Dorsolateral prefrontal cortex (tissue), 120 donors: ENCODE measurements at regions of chr2 and their contacts with region 1.

Region 1: GRCh38 chr2:75403991-75404428 is 156.7 kb downstream of the EVA1A start:
- DNase-seq: no peak
- H3K4me3 ChIP-seq: no peak overlapping the region
- H3K27ac ChIP-seq: no peak overlapping the region
- H3K27me3 ChIP-seq: peaks cover 0 to 64% (median 4%) of the 10 kb centered on the region in 45 donors
- CTCF ChIP-seq: peak; percentile 55 to 91 (median 78)

Region 2: DNA sequence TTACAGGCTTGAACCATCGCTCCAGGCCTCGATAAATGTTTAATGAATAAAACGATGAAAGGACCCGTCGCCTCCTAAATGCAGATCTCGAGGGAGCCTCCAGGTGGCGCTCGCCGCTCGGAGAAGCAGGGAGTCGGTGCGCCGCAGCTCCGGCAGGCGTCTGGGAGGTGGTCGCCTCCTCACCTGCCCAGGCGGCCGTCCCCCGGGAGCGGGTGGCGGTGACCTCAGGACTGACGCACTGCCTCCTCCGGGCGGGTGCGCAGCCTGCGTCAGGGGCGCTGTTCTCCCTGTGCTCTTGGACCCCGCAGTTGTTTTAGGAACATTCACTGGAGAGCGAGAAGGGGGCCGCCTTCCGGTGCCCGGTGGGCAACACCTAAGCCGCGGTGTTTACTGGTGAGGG is 484.2 kb before region 1 on chr2:
- intact Hi-C with region 1: loop called in 1 of 2 experiments (anchors 5 kb)
- DNase-seq: peak in 9 of 10 donors; percentile 22 to 79 (median 55)
- H3K4me3 ChIP-seq: peak overlapping the region in 54 of 59 donors; percentile 12 to 64 (median 45)
- H3K27ac ChIP-seq: no peak overlapping the region
- H3K27me3 ChIP-seq: peaks cover 0 to 10% (median 0%) of the 10 kb centered on the region in 45 donors
- CTCF ChIP-seq: peak; percentile 71 to 94 (median 88)

Region 3: GRCh38 chr2:75053484-75054112 is 350.4 kb before region 1 on chr2:
- intact Hi-C with region 1: loop called in 1 of 2 experiments (anchors 10 kb)
- DNase-seq: no peak
- H3K4me3 ChIP-seq: no peak overlapping the region
- H3K27ac ChIP-seq: no peak overlapping the region
- H3K27me3 ChIP-seq: no peaks in the 10 kb centered on the region
- CTCF ChIP-seq: peak in 48 of 56 donors; percentile 14 to 56 (median 40)

Region 4: GRCh38 chr2:75064691-75065396 is 339.2 kb before region 1 on chr2:
- intact Hi-C with region 1: loop called in 1 of 2 experiments (anchors 10 kb)
- DNase-seq: peak in 9 of 10 donors; percentile 11 to 72 (median 54)
- H3K4me3 ChIP-seq: no peak overlapping the region
- H3K27ac ChIP-seq: no peak overlapping the region
- H3K27me3 ChIP-seq: no peaks in the 10 kb centered on the region
- CTCF ChIP-seq: peak; percentile 54 to 89 (median 77)

Region 5: DNA sequence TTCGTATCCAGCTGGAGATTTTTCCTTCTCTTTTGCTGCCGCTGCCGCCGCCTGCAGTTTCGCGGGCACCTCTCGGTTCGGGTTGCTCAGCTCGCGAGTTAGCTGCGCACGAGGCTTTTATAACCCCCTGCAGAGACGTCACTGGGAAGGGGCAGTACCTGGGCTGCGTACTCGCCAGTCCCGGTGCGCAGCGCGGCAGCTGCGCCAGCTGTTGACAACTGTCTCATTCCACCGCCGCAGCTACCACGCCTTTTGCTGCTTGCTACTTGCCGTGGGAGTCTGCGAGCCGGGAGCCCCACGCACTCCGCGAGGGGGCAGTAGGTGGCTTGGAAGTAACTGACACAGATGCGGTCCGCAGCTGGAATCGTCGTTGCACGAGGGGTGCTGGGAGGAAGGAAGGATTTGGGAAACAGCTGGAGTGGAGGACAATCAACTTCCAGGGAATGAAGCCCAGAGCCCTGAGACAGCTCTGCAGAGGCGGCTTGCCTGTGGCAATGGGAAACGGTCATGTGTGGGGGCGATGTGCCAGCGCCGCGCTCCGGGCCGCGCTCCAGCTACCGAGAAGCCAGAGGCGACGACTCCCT is 204.5 kb before region 1 on chr2 and contains the start of gene TACR1:
- intact Hi-C with region 1: loop called in 1 of 2 experiments (anchors 10 kb)
- DNase-seq: peak; percentile 31 to 81 (median 73)
- H3K4me3 ChIP-seq: peak within 1 kb of the TSS; percentile 29 to 80 (median 57)
- H3K27ac ChIP-seq: peak within 1 kb of the TSS in 38 of 59 donors; percentile 3 to 76 (median 53)
- H3K27me3 ChIP-seq: peaks cover 0 to 51% (median 11%) of the 10 kb centered on the region in 45 donors
- CTCF ChIP-seq: peak in 55 of 56 donors; percentile 16 to 72 (median 59)
- total RNA-seq, gene TACR1: 0.91 to 8.5 (median 2.9) TPM